Psoas muscle (tissue), 8 donors: ENCODE measurements at regions of chr4 and their contacts with region 1.

Region 1: GRCh38 chr4:142883040-142883832 is 37.1 kb upstream of the INPP4B start:
- DNase-seq: no peak
- ATAC-seq: peak in 2 of 4 donors; percentile 49 to 67
- H3K4me3 ChIP-seq: no peak overlapping the region
- H3K27ac ChIP-seq: no peak overlapping the region
- H3K4me1 ChIP-seq: no peaks in the 10 kb centered on the region
- H3K27me3 ChIP-seq: no peaks in the 10 kb centered on the region
- CTCF ChIP-seq: peak; percentile 49

Region 2: DNA sequence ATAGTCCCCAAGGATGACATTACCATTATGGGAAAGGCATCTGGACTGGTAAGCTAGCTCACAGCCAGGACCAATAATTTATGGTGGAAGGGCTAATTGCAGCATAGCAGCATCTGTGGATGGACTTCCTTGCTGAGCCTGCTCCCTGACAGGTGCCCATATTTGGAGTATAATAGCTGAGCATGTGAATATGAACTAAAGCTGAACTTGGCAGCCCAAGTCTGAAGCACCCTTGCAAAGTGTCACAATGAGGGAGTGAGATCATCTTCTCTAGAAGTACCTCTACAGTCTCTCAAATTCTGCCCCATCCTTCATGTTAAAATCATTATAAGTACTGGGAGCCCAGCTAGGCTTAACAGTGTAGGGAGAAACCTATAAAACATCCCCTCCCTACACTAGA is 91.1 kb after region 1 on chr4:
- intact Hi-C with region 1: no loop called
- DNase-seq: no peak
- ATAC-seq: peak in 3 of 4 donors; percentile 70 to 86 (median 78)
- H3K4me3 ChIP-seq: no peak overlapping the region
- H3K27ac ChIP-seq: no peak overlapping the region
- H3K4me1 ChIP-seq: no peaks in the 10 kb centered on the region
- H3K27me3 ChIP-seq: no peaks in the 10 kb centered on the region
- CTCF ChIP-seq: no peak

Region 3: DNA sequence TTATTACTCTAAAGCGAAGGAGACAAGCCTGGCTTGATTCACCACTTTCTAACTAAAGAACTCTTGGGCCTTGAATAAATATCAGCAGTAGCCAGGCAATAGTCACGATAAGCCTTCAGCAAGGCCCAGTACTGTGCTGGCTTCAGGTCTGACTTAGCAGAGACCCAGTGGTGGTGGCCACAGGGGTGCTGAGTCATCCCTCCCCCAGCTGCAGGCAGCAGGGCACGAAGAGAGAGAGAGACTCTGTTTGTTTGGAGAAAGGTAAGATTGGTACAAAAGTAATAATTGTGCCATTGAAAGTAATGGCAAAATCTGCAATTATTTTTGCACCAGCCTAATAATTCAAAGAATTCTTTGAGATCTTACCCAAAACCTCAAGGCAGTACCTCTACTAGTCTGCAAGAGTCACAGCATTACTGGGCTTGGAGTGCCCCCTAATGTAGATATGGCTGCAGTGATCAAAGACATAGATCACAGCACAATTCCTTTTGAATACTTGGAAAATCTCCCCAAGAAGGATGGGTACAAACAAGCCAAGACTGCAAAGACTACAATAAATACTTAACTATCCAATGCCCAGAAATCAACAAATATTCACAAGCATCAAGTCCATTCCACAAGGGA is 142.0 kb after region 1 on chr4:
- intact Hi-C with region 1: loop called (anchors 10 kb)
- DNase-seq: no peak
- ATAC-seq: peak in 1 of 4 donors; percentile 56
- H3K4me3 ChIP-seq: no peak overlapping the region
- H3K27ac ChIP-seq: no peak overlapping the region
- H3K4me1 ChIP-seq: no peaks in the 10 kb centered on the region
- H3K27me3 ChIP-seq: no peaks in the 10 kb centered on the region
- CTCF ChIP-seq: peak; percentile 33